ENCODE measurements at regions of chrX and their contacts with region 1.

Region 1: DNA sequence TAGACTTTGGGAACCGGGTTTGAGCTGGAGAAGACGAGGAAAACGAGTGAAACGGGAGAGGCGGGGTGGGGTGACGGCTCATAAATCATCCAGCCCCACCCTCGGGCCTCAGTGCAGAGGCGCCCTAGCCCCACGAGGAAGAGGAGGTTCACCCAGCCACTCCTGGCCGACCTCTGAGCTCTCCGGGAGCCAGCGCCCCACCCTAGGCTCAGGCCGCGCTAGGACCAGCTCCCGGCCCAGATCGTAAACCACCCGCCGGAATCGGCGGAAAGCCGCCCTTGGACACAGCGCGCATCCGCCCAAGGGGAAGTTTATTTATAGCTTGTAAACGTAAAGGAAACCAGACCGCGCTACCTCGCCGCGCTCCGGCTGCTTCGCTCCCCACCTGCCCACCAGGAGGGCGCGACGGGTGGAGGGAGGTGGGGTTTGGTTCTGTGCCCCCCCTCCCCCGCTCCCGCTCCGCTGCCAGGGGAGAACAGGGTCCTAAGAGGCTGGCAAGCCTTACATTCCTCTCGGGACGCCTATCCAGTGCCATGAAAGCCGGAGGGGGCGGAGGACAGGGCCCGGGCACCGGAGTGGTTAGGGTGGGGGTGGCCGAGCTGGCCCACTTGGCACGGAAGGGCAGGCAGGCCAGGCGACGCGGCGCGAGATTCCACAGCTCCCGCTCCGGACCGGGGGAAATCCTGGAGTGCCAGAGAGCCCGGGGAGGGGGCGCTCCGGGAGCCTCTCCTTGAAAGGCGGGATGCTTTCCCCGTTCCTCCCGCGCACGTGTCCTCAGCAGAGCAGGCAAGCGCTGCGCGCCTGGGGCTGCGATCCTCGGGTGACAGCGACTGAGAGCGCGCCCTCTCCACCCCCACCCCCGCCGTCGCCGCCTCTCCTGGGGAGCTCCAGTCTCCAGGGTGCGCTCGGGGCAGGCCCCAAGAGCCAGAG is 84.2 kb downstream of the BCOR start:
- DNase-seq: peak; percentile 88
- H3K4me3 ChIP-seq: peak overlapping the region; percentile 51 to 64 (median 58)
- H3K27ac ChIP-seq: peak overlapping the region; percentile 83 to 91 (median 90)
- H3K4me1 ChIP-seq: peaks cover 0 to 42% (median 14%) of the 10 kb centered on the region in 4 donors
- H3K27me3 ChIP-seq: peaks cover 0 to 4% (median 0%) of the 10 kb centered on the region in 3 donors
- CTCF ChIP-seq: no peak
- EP300 ChIP-seq: peak in 1 of 4 donors; percentile 22
- POLR2A ChIP-seq: no peak

Region 2: GRCh38 chrX:38803586-38804431 is 1209.7 kb before region 1 on chrX:
- intact Hi-C with region 1: loop called (anchors 5 kb)
- DNase-seq: peak; percentile 92
- H3K4me3 ChIP-seq: peak overlapping the region; percentile 54 to 78 (median 68)
- H3K27ac ChIP-seq: peak overlapping the region; percentile 90 to 95 (median 93)
- H3K4me1 ChIP-seq: peaks cover 0 to 24% (median 17%) of the 10 kb centered on the region in 4 donors
- H3K27me3 ChIP-seq: no peaks in the 10 kb centered on the region
- CTCF ChIP-seq: no peak
- EP300 ChIP-seq: peak in 1 of 4 donors; percentile 42
- POLR2A ChIP-seq: peak; percentile 75 to 85

Region 3: DNA sequence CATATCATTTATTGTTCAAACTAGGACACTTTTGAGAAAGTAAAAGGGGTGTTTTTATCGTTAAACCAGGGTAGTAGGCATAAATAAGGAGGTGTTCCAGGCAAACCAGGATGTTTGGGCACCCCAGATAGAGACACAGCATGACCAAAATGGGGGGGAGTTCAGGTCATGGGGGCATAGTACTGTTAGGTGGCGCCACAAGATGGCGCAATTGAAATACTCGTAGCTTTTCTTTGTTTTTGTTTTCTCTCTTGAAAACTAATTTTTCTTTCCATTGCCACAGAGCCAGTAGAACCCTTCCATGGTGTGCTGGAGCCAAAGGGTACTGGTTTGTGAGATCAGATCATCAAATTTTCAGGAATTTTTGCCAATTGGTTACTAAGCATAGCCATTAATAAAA is 199.1 kb before region 1 on chrX:
- intact Hi-C with region 1: loop called (anchors 10 kb)
- DNase-seq: no peak
- H3K4me3 ChIP-seq: no peak overlapping the region
- H3K27ac ChIP-seq: peak overlapping the region in 2 of 4 donors; percentile 43 to 44
- H3K4me1 ChIP-seq: peaks cover 0 to 6% (median 0%) of the 10 kb centered on the region in 4 donors
- H3K27me3 ChIP-seq: no peaks in the 10 kb centered on the region
- CTCF ChIP-seq: peak in 3 of 4 experiments; percentile 13 to 26 (median 23)
- EP300 ChIP-seq: no peak
- POLR2A ChIP-seq: no peak

Region 4: GRCh38 chrX:39869846-39870601 is 143.5 kb before region 1 on chrX:
- intact Hi-C with region 1: no loop called
- DNase-seq: no peak
- H3K4me3 ChIP-seq: no peak overlapping the region
- H3K27ac ChIP-seq: no peak overlapping the region
- H3K4me1 ChIP-seq: no peaks in the 10 kb centered on the region
- H3K27me3 ChIP-seq: no peaks in the 10 kb centered on the region
- CTCF ChIP-seq: no peak
- EP300 ChIP-seq: no peak
- POLR2A ChIP-seq: no peak

Region 5: DNA sequence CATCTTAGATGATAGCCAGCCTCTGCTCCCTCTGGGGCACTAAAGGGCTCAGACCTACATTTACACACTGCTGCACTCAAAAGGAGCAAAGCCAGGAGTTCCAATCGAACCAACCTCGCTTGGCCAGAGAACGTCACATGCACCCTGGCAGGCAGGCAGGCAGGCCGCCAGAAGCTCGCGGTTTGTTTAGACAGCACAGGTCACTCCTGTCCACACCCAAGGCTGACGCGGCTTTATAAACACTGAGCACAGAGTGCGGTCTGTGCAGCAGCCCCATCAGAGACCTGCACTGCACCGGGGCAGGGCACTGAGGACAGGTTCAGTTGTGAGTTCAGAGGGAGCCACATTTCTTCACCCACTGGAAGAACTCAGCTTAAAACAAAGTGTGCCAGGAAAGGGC is 59.6 kb before region 1 on chrX:
- intact Hi-C with region 1: loop called (anchors 5 kb)
- DNase-seq: peak; percentile 87
- H3K4me3 ChIP-seq: no peak overlapping the region
- H3K27ac ChIP-seq: no peak overlapping the region
- H3K4me1 ChIP-seq: peaks cover 0 to 8% (median 0%) of the 10 kb centered on the region in 4 donors
- H3K27me3 ChIP-seq: no peaks in the 10 kb centered on the region
- CTCF ChIP-seq: no peak
- EP300 ChIP-seq: peak in 1 of 4 donors; percentile 26
- POLR2A ChIP-seq: no peak

Region 6: DNA sequence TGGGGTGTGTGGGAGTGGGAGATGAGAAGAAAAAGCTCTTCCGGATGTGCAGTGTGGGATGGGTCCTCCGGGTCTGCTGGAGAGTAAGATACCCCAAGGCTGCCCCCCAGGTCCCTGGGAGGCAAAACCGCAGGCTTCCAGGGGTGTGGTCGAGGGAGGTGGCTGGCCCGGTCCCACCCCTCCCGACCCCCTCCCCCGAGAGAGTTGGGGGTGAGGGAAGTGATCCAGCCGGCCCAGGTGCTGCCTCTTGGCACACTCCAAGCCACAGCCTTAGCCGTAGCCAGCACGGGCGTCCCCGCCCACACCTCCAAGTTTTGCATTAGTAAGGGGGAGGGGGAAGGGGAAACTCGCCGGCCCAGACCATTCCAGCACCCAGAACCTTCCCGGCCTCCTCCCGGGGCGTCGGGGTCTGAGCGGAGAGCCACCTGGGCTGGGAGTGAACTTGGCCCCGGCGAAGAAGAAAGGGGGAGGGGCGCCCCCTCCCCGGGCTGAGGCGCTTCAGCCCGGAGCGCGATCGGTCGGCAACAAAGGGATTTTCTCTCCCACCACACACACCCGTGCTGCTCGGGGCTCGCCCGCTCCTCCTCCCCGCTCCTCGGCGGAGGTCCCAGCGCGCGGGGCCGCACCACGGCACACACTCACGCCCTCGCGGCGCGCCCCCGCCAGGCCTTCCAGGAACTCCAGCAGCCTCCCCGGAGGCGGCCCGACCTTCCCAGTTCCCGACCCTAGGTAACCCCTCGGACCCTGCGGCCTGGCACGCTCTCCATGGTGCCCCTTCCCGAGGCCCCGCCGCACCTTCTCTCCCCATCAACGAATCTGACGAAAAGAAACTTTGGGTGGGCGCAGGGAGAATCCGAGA is 69.8 kb after region 1 on chrX:
- intact Hi-C with region 1: loop called (anchors 5 kb)
- DNase-seq: no peak
- H3K4me3 ChIP-seq: peak overlapping the region; percentile 18 to 47 (median 44)
- H3K27ac ChIP-seq: peak overlapping the region in 3 of 4 donors; percentile 35 to 56 (median 37)
- H3K4me1 ChIP-seq: peaks cover 0 to 74% (median 68%) of the 10 kb centered on the region in 4 donors
- H3K27me3 ChIP-seq: no peaks in the 10 kb centered on the region
- CTCF ChIP-seq: no peak
- EP300 ChIP-seq: no peak
- POLR2A ChIP-seq: no peak

Region 7: DNA sequence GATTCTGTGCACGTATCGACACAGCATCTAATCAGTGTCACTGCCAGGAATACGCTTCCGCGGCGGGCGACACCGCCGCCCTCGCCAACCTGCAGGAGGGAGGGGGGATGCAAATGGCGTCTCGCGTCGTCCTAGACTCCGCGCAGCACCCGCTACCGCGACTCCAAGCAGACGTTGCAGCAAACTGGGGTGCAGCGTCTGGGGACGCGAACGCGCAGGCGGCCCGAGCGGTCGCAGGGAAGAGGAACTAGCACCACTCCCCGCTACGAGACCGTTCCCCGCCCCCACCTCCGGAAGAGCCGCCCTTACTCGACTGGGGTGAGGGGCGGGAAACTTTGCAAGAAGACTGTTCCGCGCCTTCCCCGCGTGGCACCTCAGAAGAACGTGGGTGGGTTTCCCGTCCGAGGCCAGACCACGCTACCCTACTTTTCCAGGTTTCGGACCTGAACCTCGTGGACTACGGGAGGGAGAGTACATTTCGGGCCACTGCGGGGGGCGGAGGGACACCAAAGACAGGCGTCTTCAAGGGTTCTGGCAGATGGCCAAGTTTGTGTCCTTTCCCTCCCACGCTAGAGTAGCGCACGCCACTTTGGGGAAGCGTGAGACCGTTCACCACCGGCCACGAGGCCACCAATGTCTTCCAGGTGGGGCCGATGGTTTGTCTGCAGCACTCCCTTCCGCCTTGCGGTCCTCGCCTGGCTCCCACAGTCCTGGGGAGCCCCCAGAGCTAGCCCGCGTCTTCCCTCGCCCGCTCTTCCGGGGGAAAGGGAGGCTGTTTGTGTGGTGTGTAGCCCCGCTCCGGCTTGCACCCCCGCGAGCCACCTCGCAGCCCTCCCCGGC is 162.2 kb after region 1 on chrX:
- intact Hi-C with region 1: loop called (anchors 2 kb)
- DNase-seq: peak; percentile 89
- H3K4me3 ChIP-seq: peak overlapping the region; percentile 38 to 63 (median 56)
- H3K27ac ChIP-seq: peak overlapping the region; percentile 91 to 97 (median 93)
- H3K4me1 ChIP-seq: peaks cover 0 to 46% (median 26%) of the 10 kb centered on the region in 4 donors
- H3K27me3 ChIP-seq: peaks cover 0 to 5% (median 0%) of the 10 kb centered on the region in 3 donors
- CTCF ChIP-seq: no peak
- EP300 ChIP-seq: no peak
- POLR2A ChIP-seq: no peak